GM10248 (cell line): ENCODE measurements at regions of chr3 and their contacts with region 1.

Region 1: DNA sequence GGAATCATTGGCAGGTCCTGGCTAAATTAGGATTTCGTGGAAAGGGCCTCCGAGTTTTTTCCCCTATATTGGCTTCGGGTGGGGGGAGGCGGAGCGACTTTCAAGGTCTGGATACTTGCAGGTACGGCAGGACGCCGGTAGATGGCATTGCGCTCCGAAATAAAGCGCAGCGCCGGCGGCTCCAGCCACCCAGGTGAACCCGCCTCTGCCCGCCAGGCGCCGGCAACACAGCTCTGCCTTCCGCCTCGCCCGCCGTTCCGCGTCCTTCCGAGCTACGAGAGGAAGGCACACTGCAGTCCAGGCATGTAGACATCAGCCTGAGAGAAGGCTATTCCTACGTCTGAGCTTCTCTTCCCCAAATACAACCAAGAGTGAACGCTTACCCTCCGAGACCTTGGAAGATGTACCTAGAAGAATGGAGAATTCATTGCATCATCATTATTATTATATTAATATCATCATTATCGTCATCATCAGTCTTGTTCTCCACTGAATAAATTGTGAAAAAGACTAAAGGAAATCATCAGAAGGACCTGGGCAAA is 514.1 kb downstream of the MECOM start:
- DNase-seq: peak; percentile 82
- CTCF ChIP-seq: peak; percentile 82

Region 2: GRCh38 chr3:169128579-169128978 is 20.8 kb before region 1 on chr3:
- CTCF ChIA-PET with region 1: interaction called, 10 read pairs
- POLR2A ChIA-PET with region 1: no interaction called
- DNase-seq: no peak
- CTCF ChIP-seq: no peak

Region 3: DNA sequence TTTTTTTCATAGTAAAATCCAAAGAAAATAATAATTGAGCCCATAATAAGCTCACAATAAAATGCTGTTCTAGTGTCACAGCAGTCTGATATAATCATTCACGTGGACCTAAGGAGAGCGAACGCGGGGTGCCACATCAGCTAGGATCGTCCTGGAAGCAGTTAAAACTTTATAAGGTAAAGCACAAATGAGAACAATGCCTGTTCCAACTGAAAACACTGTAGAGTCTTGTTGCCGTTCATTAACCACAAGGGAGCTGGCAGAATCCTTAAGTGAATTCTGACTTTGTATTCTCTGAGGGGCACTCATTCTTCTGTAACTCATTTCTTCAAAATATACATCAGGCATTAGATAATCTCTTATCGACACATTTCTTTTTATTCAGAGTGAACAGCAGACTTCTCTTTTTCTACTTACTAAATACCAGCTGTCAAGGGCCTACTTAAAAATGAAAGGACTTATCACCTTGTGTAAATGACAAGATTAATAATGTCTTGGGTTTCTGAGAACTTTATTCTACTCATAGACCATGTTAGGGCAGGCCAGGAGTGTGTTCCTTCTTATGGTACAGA is 10.5 kb before region 1 on chr3:
- CTCF ChIA-PET with region 1: interaction called, 21 read pairs
- POLR2A ChIA-PET with region 1: interaction called, 5 read pairs
- DNase-seq: no peak
- CTCF ChIP-seq: no peak

Region 4: DNA sequence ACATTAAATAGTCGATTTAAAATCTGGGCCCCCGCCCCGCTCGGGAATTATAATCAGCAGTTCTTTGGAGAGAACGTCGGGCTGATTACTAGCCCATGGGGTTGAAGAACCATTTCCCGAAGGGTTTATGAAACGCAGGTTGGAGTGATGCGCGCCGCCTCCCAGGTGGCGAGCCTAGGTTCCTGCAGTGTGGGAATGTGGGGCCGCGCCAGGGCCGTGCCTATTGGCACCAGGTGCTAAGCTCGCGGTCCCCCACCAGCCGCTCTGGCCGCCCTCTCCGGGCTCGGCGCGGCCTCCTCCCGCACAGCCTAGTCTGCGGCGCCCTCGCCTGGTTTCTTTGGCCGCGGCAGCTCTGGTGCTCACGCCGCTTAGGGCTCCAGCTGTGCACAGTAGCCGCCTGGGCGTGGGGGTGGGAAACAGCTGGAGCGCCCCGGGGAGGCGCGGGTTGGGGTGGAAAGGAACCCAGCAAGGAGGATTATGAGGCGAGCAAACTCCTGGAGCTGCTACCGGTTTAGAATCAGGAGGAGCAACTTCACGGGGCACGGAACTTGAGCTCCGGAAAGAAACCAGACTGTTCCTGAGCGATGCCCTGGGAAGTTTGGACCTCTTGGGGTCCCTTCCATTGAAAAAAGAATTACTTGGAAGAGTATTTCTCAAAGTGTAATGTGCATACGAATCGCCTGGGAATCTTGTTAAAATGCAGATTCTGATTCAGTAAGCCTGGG is 519.7 kb after region 1 on chr3:
- CTCF ChIA-PET with region 1: interaction called, 69 read pairs
- POLR2A ChIA-PET with region 1: no interaction called
- DNase-seq: peak; percentile 76
- CTCF ChIP-seq: peak; percentile 81